Dendritic cell treated with granulocyte-macrophage colony-stimulating factor and Interleukin-4, amounts not matched to agents 40 ng/mL and 50 ng/mL, for 4 days (primary cell): ENCODE measurements at regions of chr2 and their contacts with region 1.

Region 1: DNA sequence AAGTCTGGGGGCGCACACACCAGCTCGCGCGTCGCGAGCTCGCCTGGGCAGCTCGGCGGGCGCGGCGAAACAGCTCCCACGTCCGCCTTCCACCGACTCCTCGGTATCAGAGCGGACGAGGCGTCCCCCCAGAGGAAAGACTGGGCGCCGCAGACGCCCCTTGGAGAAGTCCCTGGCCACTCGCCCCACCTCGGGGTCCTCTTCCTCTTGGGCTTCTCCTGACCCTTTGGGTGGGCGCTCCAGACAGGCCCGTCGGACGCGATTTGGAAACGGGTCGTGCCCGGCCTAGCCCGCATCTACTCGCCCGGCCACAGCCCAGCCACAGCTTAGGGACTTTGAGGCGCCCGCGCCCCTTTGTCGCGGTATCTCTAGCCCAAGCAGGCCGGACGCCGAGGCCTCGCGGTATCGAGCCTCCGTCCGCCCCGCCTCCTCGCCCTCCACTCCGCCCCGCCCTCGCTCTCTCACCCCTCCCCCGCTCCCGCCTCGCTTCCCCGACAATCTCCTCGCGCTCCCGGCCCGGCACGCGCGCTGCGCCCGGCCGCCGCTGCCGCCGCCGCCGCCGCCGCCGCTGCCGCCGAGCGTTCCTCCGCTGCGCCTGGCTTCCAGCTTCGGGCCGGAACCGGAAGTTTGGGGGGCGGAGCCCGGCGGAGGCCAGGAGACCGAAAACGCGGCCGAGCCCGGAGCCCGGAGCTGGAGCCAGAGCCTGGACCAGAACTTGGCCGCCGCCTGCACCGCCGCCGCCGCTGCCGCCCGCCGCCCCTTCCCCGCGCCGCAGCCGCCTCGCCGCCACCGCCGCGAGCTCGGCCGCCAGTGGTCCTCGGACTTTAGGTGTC is 749 bp upstream of the ACVR2A start:
- H3K4me3 Mint-ChIP-seq: peak overlapping the region; percentile 98
- H3K27ac Mint-ChIP-seq: peak overlapping the region; percentile 99
- H3K4me1 Mint-ChIP-seq: peaks cover 36% of the 10 kb centered on the region
- H3K27me3 Mint-ChIP-seq: peaks cover 27% of the 10 kb centered on the region

Region 2: GRCh38 chr2:147696448-147696847 is 147.6 kb before region 1 on chr2:
- intact Hi-C with region 1: loop called (anchors 10 kb)
- H3K4me3 Mint-ChIP-seq: no peak overlapping the region
- H3K27ac Mint-ChIP-seq: no peak overlapping the region
- H3K4me1 Mint-ChIP-seq: peaks cover 25% of the 10 kb centered on the region
- H3K27me3 Mint-ChIP-seq: peaks cover 2% of the 10 kb centered on the region

Region 3: DNA sequence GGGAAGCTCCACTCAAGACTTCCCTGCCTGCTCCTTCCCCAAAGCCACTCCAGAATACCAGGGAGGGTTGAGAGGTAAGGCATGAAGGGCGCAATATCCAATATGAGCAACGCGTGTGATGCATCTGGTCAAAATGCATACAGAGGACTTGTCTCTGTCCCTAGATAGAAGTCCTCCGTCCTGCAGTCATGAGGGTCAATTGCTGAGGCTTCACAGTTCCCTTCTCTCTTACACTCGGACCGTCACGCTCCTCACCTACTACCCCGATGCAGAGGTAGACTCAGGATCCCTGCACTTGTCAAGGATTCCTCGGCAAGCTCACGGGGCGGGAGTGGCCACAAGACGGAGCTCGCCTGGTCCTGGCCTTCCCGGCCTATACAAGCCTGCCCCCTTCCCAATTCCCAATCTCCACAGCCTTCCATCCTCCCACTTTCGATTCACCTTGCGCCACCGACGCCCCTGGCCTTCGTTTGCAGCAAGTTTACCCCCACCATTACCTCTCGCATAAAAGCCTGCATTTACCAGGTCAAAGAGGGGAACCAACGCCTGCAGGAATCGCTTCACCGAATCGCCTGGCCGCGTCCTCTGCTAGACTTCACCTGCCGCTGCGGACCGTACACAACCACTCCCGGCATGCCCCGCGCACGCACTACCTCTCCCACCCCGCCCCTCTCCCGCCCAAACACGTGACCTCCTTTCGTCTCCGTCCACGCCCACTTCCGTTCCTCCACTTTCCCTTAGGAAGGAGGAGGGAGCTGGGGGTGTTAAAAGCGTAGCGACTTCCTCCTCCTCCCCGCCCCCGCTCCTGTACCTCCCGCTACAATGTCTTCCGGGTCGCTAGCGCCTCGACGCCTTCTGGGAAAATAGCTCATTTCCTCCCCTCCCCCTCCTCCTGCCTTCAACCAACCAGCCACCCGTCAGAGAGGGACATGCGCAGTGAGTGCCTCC is 176.3 kb after region 1 on chr2 and contains the start of gene ORC4:
- intact Hi-C with region 1: loop called (anchors 10 kb)
- H3K4me3 Mint-ChIP-seq: peak within 1 kb of the TSS; percentile 99
- H3K27ac Mint-ChIP-seq: peak within 1 kb of the TSS; percentile 100
- H3K4me1 Mint-ChIP-seq: peaks cover 54% of the 10 kb centered on the region
- H3K27me3 Mint-ChIP-seq: no peaks in the 10 kb centered on the region